Gastrocnemius medialis (tissue), 4 donors: ENCODE measurements at regions of chr10 and their contacts with region 1.

Region 1: DNA sequence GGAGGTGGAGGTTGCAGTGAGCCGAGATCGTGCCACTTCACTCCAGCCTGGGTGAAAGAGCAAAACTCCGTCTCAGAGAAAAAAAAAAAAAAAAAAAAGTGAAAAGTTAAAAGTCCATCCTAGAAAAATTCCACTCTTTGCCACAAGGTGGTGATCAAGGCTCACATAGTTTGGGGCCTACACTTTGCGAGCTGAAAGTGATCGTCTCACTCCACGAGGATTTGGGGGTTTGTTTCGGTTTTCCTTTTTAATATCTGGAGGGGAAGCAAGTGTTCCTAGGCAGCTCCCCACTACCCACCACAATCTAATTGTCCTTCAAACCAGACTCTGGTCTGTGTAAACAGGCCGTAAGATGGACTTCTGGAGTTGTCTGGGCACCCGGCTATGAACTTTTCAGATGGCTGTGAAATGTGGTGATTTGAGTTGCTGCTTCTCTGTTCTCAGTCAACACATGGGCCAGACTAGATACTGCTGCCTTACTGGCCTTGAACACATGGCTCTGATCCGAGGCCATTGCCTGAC is 27.1 kb downstream of the PRLHR start:
- DNase-seq: no peak
- ATAC-seq: peak; percentile 49 to 60
- H3K4me3 ChIP-seq: no peak overlapping the region
- H3K27ac ChIP-seq: no peak overlapping the region
- H3K4me1 ChIP-seq: peaks cover 4 to 21% of the 10 kb centered on the region in 2 donors
- H3K27me3 ChIP-seq: no peaks in the 10 kb centered on the region
- CTCF ChIP-seq: peak; percentile 70 to 87 (median 80)
- POLR2A ChIP-seq: no peak

Region 2: DNA sequence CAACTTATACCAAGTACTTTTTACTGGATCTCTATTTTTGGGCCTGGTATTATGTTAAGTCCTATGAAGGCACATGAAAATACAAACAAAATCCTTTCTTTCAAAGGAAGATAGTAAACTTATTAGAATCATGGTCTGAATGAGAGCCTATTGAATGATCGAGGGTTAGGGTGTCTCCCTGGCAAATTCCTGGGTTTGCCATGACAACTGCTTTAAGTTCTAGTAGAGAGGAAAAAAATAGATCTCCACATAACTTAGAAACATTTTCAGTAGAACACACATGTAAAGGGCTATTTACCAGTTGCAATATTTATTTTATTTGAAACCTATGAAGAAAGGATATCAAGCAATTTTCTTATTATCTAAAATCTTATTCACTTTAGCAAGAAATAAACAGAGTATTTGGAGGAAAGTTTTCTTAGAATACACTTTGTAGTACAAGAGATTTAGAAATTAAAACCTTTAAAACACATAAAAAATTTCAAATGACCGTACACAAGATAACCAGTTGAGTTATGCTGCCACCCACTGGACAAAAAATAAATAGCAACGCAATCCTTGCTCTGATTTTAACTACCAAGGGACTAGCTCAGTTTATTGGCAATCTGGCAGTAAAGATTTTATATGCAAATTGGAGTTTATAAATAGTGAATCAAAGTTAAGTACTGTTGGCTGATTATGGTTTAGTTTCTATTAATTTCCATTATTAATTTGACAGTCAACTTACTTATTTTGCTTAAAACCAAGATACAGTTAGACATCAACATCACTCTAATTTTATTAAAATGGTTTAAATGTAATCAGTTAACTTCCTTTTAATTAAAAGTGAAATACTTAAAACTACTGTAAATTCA is 152.5 kb after region 1 on chr10:
- in situ Hi-C with region 1: loop called (anchors 5 to 10 kb)
- intact Hi-C with region 1: loop called (anchors 1 kb)
- DNase-seq: no peak
- ATAC-seq: no peak
- H3K4me3 ChIP-seq: no peak overlapping the region
- H3K27ac ChIP-seq: no peak overlapping the region
- H3K4me1 ChIP-seq: peaks cover 41 to 47% of the 10 kb centered on the region in 2 donors
- H3K27me3 ChIP-seq: no peaks in the 10 kb centered on the region
- CTCF ChIP-seq: peak; percentile 63 to 92 (median 76)
- POLR2A ChIP-seq: no peak

Region 3: DNA sequence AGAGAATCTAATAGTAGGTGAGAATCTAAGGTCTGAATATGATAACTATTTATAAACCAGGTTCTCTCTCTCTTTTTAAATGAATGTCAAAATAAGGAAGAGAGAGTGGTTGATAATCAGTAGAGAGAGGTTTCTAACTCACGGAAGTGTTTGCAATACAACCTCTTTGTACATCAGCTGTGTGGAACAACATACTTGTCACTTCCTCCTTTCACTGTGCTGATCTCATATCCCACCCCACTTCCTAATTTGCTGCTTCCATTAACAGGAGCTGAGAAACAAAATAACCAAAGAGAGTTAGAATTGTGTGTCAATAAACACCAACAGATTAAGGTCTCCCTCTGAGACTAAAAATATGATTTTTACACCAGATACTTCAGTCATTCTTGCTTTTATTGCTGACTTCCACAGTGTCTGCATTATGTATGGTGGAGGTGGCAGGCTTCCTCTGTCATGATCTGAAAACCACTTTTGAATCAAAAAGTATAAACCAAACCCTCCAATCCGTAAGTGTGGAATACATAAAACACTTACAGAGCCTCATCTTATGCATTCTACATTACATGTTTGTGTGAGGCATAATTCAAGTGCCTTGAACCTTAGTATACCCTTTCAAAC is 161.4 kb after region 1 on chr10:
- in situ Hi-C with region 1: loop called (anchors 5 to 10 kb)
- intact Hi-C with region 1: no loop called
- DNase-seq: no peak
- ATAC-seq: peak in 1 of 2 donors; percentile 51
- H3K4me3 ChIP-seq: no peak overlapping the region
- H3K27ac ChIP-seq: peak overlapping the region; percentile 11 to 54 (median 44)
- H3K4me1 ChIP-seq: peaks cover 71 to 86% of the 10 kb centered on the region in 2 donors
- H3K27me3 ChIP-seq: no peaks in the 10 kb centered on the region
- CTCF ChIP-seq: no peak
- POLR2A ChIP-seq: no peak

Region 4: DNA sequence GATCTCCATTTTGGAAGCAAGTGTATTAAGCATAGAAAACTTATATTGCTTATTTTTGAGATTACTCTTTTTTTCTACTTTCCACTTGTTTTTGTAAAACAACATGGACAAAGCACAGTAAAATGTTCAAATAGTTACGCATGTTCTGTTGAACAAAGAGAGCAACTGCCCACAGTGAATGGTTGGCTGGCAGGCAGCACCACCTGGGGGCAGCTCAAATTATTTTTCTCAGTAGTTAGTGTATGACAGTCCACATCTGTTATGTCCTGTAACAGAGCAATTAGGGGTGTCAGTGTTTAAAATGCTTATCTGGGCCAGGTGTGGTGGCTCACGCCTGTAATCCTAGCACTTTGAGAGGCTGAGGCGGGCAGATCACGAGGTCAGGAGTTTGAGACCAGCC is 232.5 kb after region 1 on chr10:
- in situ Hi-C with region 1: loop called in 2 of 4 experiments (anchors 5 to 25 kb)
- intact Hi-C with region 1: no loop called
- DNase-seq: no peak
- ATAC-seq: no peak
- H3K4me3 ChIP-seq: no peak overlapping the region
- H3K27ac ChIP-seq: no peak overlapping the region
- H3K4me1 ChIP-seq: peaks cover 0 to 5% of the 10 kb centered on the region in 2 donors
- H3K27me3 ChIP-seq: no peaks in the 10 kb centered on the region
- CTCF ChIP-seq: peak; percentile 11 to 47 (median 34)
- POLR2A ChIP-seq: no peak

Region 5: DNA sequence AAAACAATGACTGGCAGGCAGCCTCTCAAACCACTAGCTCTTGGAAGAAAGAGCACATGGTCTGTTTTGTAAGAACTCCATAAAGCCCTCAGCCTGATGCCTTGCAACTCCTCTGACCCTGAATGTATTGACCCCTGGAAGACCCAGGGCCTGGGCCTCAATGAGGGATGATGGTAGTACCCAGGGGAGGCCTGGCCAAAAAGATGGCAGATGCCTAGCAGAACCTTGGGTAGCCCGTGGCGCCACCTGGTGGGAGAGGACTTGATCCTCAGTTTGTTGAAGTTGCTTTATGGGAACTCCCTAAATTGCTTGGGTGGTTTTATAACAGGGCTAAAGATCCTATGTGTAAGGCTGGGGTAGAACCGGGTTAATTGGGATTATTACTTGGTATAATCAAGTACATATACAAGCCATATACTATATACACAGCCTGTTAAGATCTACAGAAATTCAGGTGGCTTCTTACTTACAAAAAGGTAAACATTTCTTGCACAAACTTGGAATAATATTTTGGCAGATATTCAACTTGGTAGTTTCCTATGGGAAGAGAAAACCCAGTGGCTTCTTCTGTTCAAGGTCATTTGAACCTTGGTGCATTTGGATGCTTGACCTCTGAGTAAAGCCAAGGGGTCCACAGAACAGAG is 282.2 kb after region 1 on chr10:
- in situ Hi-C with region 1: no loop called
- intact Hi-C with region 1: loop called (anchors 1 kb)
- DNase-seq: peak in 1 of 2 donors; percentile 43
- ATAC-seq: no peak
- H3K4me3 ChIP-seq: no peak overlapping the region
- H3K27ac ChIP-seq: no peak overlapping the region
- H3K4me1 ChIP-seq: no peaks in the 10 kb centered on the region
- H3K27me3 ChIP-seq: no peaks in the 10 kb centered on the region
- CTCF ChIP-seq: peak in 4 of 5 experiments; percentile 18 to 66 (median 38)
- POLR2A ChIP-seq: no peak